CD4-positive, alpha-beta T cell (primary cell): ENCODE measurements at regions of chr15 and their contacts with region 1.

Region 1: GRCh38 chr15:46676233-46677206 is 1040.8 kb upstream of the SEMA6D start:
- DNase-seq: no peak
- ATAC-seq: no peak
- H3K4me3 ChIP-seq: no peak overlapping the region
- H3K4me3 Mint-ChIP-seq: no peak overlapping the region
- H3K27ac ChIP-seq: no peak overlapping the region
- H3K27ac Mint-ChIP-seq: no peak overlapping the region
- H3K4me1 ChIP-seq: no peaks in the 10 kb centered on the region
- H3K4me1 Mint-ChIP-seq: no peaks in the 10 kb centered on the region
- H3K27me3 ChIP-seq: no peaks in the 10 kb centered on the region
- H3K27me3 Mint-ChIP-seq: no peaks in the 10 kb centered on the region
- CTCF ChIP-seq: no peak

Region 2: DNA sequence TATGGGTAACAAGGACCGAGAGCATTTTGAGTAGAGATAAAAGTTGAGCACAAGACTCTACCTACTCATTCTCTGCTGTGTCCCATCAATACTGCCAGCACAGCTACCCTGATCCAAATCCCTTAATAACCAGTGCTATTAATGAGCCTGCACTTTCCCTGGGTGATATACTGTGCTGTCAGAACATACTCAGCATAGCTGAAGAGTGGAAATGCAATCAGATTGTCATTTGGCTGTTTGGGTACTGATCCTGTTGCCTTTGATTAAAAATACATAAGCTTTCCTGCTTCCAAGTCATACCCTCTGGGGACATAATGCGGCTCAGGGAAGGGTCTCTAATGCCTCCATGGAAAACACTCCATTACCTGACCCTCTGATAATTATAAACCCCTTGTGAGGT is 124.2 kb before region 1 on chr15:
- CTCF ChIA-PET with region 1: no interaction called
- POLR2A ChIA-PET with region 1: no interaction called
- intact Hi-C with region 1: no loop called
- DNase-seq: no peak
- ATAC-seq: no peak
- H3K4me3 ChIP-seq: no peak overlapping the region
- H3K4me3 Mint-ChIP-seq: no peak overlapping the region
- H3K27ac ChIP-seq: no peak overlapping the region
- H3K27ac Mint-ChIP-seq: no peak overlapping the region
- H3K4me1 ChIP-seq: no peaks in the 10 kb centered on the region
- H3K4me1 Mint-ChIP-seq: no peaks in the 10 kb centered on the region
- H3K27me3 ChIP-seq: no peaks in the 10 kb centered on the region
- H3K27me3 Mint-ChIP-seq: no peaks in the 10 kb centered on the region
- CTCF ChIP-seq: no peak

Region 3: GRCh38 chr15:46735115-46735514 is 58.6 kb after region 1 on chr15:
- CTCF ChIA-PET with region 1: no interaction called
- POLR2A ChIA-PET with region 1: no interaction called
- intact Hi-C with region 1: loop called (anchors 10 kb)
- DNase-seq: no peak
- ATAC-seq: no peak
- H3K4me3 ChIP-seq: no peak overlapping the region
- H3K4me3 Mint-ChIP-seq: no peak overlapping the region
- H3K27ac ChIP-seq: no peak overlapping the region
- H3K27ac Mint-ChIP-seq: no peak overlapping the region
- H3K4me1 ChIP-seq: no peaks in the 10 kb centered on the region
- H3K4me1 Mint-ChIP-seq: no peaks in the 10 kb centered on the region
- H3K27me3 ChIP-seq: no peaks in the 10 kb centered on the region
- H3K27me3 Mint-ChIP-seq: no peaks in the 10 kb centered on the region
- CTCF ChIP-seq: no peak

Region 4: DNA sequence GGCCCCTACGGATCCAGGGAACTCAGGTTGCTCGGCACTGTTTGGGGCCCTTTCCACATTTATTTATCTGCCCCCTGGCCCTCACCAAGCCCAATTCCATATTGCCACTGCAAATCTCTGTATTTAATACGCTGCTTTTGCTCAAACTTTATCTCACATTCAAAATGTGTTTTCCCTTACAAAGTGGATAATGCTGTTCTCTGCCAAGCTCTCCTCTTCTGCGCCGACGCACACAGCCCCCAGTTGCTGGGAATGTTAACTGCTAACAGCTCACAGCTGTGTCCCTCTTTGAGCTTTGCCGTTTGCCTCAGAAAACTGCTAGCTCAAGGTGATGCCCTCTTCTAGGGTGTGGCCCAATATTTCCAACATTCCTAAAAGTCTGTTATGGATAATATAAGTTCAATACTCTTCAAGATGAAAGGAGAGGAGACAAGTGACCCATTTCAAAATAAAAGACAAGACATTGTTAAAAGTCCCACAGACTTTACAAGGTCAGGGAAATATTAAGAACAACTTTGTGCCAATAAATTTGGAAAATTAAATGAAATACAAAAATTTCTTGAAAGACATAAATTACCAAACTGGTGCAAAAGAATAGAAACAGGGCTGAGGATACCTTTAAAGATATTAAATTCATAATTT is 1981.6 kb after region 1 on chr15:
- CTCF ChIA-PET with region 1: no interaction called
- POLR2A ChIA-PET with region 1: no interaction called
- intact Hi-C with region 1: no loop called
- DNase-seq: no peak
- ATAC-seq: no peak
- H3K4me3 ChIP-seq: no peak overlapping the region
- H3K4me3 Mint-ChIP-seq: no peak overlapping the region
- H3K27ac ChIP-seq: no peak overlapping the region
- H3K27ac Mint-ChIP-seq: no peak overlapping the region
- H3K4me1 ChIP-seq: no peaks in the 10 kb centered on the region
- H3K4me1 Mint-ChIP-seq: no peaks in the 10 kb centered on the region
- H3K27me3 ChIP-seq: peaks cover 0 to 3% of the 10 kb centered on the region in 2 experiments
- H3K27me3 Mint-ChIP-seq: no peaks in the 10 kb centered on the region
- CTCF ChIP-seq: no peak